Activated CD8-positive, alpha-beta T cell treated with anti-CD3 and anti-CD28 coated beads for 36 hours (primary cell): ENCODE measurements at regions of chr5 and their contacts with region 1.

Region 1: GRCh38 chr5:112995764-112996618 is 19.4 kb downstream of the DCP2 start:
- DNase-seq: peak; percentile 85
- ATAC-seq: peak; percentile 94
- H3K4me3 Mint-ChIP-seq: no peak overlapping the region
- H3K27ac Mint-ChIP-seq: no peak overlapping the region
- H3K4me1 Mint-ChIP-seq: peaks cover 25% of the 10 kb centered on the region
- H3K27me3 Mint-ChIP-seq: no peaks in the 10 kb centered on the region
- CTCF ChIP-seq: peak; percentile 98

Region 2: GRCh38 chr5:112976432-112977309 is 19.3 kb before region 1 on chr5 and contains the start of gene DCP2:
- CTCF ChIA-PET with region 1: interaction called, 34 read pairs
- POLR2A ChIA-PET with region 1: interaction called, 3 read pairs
- intact Hi-C with region 1: no loop called
- DNase-seq: peak; percentile 98
- ATAC-seq: peak; percentile 95
- H3K4me3 Mint-ChIP-seq: peak within 1 kb of the TSS; percentile 93
- H3K27ac Mint-ChIP-seq: peak within 1 kb of the TSS; percentile 98
- H3K4me1 Mint-ChIP-seq: peaks cover 36% of the 10 kb centered on the region
- H3K27me3 Mint-ChIP-seq: no peaks in the 10 kb centered on the region
- CTCF ChIP-seq: no peak
- total RNA-seq, gene DCP2: 88.9 to 91.0 TPM

Region 3: GRCh38 chr5:113034182-113034773 is 38.3 kb after region 1 on chr5:
- CTCF ChIA-PET with region 1: interaction called, 16 read pairs
- POLR2A ChIA-PET with region 1: no interaction called
- intact Hi-C with region 1: no loop called
- DNase-seq: no peak
- ATAC-seq: no peak
- H3K4me3 Mint-ChIP-seq: no peak overlapping the region
- H3K27ac Mint-ChIP-seq: no peak overlapping the region
- H3K4me1 Mint-ChIP-seq: peaks cover 4% of the 10 kb centered on the region
- H3K27me3 Mint-ChIP-seq: no peaks in the 10 kb centered on the region
- CTCF ChIP-seq: no peak

Region 4: GRCh38 chr5:113067635-113068344 is 71.8 kb after region 1 on chr5:
- CTCF ChIA-PET with region 1: interaction called, 10 read pairs
- POLR2A ChIA-PET with region 1: no interaction called
- intact Hi-C with region 1: no loop called
- DNase-seq: no peak
- ATAC-seq: no peak
- H3K4me3 Mint-ChIP-seq: no peak overlapping the region
- H3K27ac Mint-ChIP-seq: no peak overlapping the region
- H3K4me1 Mint-ChIP-seq: peaks cover 44% of the 10 kb centered on the region
- H3K27me3 Mint-ChIP-seq: no peaks in the 10 kb centered on the region
- CTCF ChIP-seq: no peak

Region 5: DNA sequence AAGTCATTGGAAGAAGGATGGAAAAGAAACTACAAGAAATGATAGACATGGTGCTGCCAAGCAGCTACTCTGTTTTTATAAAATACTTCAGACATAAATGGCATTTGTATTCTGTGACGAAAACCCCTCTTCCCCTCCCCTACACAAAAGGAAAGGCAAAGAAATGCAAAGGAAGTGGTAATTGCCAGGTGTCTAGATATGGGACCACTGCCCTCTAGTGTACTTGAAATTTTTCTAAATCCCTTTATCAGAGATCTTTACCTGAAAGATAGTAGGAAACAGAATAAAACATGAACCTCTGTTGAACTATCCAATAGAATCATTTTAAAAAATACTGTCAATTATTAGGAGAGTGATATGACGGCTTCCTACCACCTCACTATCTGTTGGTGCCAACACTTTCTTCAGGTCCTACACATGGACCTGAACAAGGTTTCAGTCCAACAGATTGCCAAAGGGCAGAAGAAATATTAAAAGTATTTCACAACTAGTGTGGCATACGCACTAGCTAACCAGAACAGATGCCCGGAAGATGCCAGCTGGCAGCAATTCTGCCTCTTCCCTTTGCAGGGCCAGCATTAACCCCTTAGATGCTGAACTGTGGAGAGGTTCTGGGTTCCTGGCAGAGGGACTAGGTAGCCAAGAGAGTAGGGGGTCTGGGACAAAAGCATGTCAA is 334.7 kb after region 1 on chr5:
- CTCF ChIA-PET with region 1: interaction called, 31 read pairs
- POLR2A ChIA-PET with region 1: no interaction called
- intact Hi-C with region 1: loop called (anchors 5 kb)
- DNase-seq: no peak
- ATAC-seq: peak; percentile 89
- H3K4me3 Mint-ChIP-seq: no peak overlapping the region
- H3K27ac Mint-ChIP-seq: no peak overlapping the region
- H3K4me1 Mint-ChIP-seq: peaks cover 11% of the 10 kb centered on the region
- H3K27me3 Mint-ChIP-seq: no peaks in the 10 kb centered on the region
- CTCF ChIP-seq: peak; percentile 61

Region 6: DNA sequence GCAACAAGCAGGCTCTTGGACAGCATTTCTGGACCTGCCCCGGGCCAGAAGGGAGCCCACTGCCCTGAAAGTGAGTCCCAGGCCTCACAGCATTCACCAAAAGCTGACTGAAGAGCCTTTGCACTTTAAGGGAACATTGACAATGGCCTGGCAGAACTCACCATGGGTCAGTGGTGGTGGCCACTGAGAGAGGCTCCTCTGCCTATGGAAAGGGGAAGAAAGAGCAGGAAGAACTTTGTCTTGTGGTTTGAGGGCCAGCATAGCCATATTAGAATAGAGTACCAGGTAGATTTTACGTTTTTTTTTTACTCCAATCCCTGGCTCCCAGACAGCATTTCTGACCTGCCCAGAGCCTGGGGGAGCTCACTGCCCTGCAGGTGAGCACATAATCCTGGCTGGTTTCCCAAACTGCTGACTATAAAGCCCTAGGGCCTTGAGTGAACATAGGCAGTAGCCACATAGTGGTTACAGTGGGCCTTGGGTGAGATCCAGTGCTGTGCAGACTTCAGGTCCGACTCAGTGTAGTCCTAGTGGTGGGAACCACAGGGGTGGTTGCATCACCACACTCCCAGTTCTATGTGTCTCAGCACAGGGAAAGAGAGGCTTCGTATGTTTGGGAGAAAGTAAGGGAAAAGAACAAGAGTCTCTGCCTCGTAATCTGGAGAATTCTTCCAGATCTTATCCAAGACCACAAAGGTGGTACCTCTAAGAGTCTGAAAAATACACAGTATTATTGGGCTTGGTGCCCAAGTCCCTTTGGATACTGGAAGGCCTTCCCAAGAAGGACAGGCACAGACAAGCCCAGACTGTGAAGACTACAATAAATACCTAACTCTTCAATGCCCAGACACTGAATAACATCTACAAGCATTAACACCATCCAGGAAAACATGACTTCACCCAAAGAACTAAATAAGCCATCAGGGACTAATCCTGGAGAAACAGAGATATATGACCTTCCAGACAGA is 349.3 kb after region 1 on chr5:
- CTCF ChIA-PET with region 1: no interaction called
- POLR2A ChIA-PET with region 1: no interaction called
- intact Hi-C with region 1: no loop called
- DNase-seq: no peak
- ATAC-seq: no peak
- H3K4me3 Mint-ChIP-seq: no peak overlapping the region
- H3K27ac Mint-ChIP-seq: no peak overlapping the region
- H3K4me1 Mint-ChIP-seq: no peaks in the 10 kb centered on the region
- H3K27me3 Mint-ChIP-seq: peaks cover 6% of the 10 kb centered on the region
- CTCF ChIP-seq: no peak

Region 7: GRCh38 chr5:113606298-113607134 is 610.5 kb after region 1 on chr5:
- CTCF ChIA-PET with region 1: interaction called, 12 read pairs
- POLR2A ChIA-PET with region 1: no interaction called
- intact Hi-C with region 1: loop called (anchors 10 kb)
- DNase-seq: peak; percentile 51
- ATAC-seq: peak; percentile 77
- H3K4me3 Mint-ChIP-seq: no peak overlapping the region
- H3K27ac Mint-ChIP-seq: no peak overlapping the region
- H3K4me1 Mint-ChIP-seq: peaks cover 5% of the 10 kb centered on the region
- H3K27me3 Mint-ChIP-seq: peaks cover 6% of the 10 kb centered on the region
- CTCF ChIP-seq: peak; percentile 87